Natural killer cell (primary cell): ENCODE measurements at regions of chr12 and their contacts with region 1.

Region 1: DNA sequence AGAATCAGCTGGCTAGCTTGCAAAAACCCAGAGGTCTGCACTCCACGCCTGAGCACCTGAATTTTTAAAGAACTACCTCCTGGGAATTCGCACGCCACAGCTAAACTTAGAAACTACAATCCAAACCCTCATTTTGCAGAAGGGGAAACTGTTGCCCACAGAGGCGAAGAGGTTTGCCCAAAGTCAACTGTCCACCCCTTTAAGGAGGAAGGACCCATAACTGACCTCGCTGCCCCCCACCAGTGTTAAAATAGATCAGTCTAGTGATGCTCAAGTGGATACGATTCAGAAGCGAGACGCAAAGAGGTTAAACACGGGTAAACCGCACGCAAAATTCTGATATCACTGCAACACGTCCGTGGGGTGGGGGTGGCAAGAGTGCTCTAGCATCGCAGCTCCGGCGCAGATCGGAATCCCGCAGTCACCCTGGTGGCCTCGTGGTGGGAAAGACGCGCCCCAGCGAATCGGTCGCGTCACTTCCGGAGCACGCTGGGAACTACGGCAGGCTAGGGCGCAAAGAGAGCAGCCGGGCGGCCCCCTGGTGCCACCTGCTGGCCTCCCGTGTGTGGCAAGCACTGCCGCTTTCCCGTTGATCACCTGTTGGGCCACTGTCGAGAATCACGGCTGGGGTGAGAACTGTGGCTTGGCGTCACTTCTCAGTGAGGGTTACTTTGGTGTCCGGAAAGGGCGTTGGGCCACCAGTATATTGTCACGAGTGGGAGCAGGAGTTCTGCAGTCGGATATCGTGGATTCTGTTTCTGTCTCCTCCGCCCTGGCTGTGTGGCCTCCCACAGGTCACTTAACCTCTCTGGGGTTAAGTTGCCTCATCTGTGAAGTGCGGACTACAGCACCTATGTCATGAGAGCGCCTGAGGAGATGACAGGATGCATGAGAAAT is at the start of gene ALKBH2:
- DNase-seq: peak; percentile 96 to 98
- ATAC-seq: peak; percentile 82 to 92 (median 82)
- H3K4me3 ChIP-seq: peak within 1 kb of the TSS; percentile 58
- H3K4me3 Mint-ChIP-seq: peak within 1 kb of the TSS; percentile 86
- H3K27ac ChIP-seq: peak within 1 kb of the TSS; percentile 63
- H3K27ac Mint-ChIP-seq: peak within 1 kb of the TSS; percentile 90 to 93
- H3K4me1 ChIP-seq: peaks cover 30% of the 10 kb centered on the region
- H3K4me1 Mint-ChIP-seq: peaks cover 26 to 33% of the 10 kb centered on the region in 2 donors
- H3K27me3 ChIP-seq: no peaks in the 10 kb centered on the region
- H3K27me3 Mint-ChIP-seq: no peaks in the 10 kb centered on the region
- CTCF ChIP-seq: peak; percentile 93
- total RNA-seq, gene ALKBH2: 10.9 to 12.6 (median 11.9) TPM

Region 2: GRCh38 chr12:108664338-108665258 is 428.7 kb before region 1 on chr12:
- intact Hi-C with region 1: loop called (anchors 2 kb)
- DNase-seq: peak; percentile 65 to 90
- ATAC-seq: peak; percentile 99 to 100 (median 100)
- H3K4me3 ChIP-seq: no peak overlapping the region
- H3K4me3 Mint-ChIP-seq: no peak overlapping the region
- H3K27ac ChIP-seq: peak overlapping the region; percentile 14
- H3K27ac Mint-ChIP-seq: peak overlapping the region; percentile 63 to 88
- H3K4me1 ChIP-seq: peaks cover 6% of the 10 kb centered on the region
- H3K4me1 Mint-ChIP-seq: peaks cover 5 to 12% of the 10 kb centered on the region in 2 donors
- H3K27me3 ChIP-seq: no peaks in the 10 kb centered on the region
- H3K27me3 Mint-ChIP-seq: no peaks in the 10 kb centered on the region
- CTCF ChIP-seq: peak; percentile 84

Region 3: DNA sequence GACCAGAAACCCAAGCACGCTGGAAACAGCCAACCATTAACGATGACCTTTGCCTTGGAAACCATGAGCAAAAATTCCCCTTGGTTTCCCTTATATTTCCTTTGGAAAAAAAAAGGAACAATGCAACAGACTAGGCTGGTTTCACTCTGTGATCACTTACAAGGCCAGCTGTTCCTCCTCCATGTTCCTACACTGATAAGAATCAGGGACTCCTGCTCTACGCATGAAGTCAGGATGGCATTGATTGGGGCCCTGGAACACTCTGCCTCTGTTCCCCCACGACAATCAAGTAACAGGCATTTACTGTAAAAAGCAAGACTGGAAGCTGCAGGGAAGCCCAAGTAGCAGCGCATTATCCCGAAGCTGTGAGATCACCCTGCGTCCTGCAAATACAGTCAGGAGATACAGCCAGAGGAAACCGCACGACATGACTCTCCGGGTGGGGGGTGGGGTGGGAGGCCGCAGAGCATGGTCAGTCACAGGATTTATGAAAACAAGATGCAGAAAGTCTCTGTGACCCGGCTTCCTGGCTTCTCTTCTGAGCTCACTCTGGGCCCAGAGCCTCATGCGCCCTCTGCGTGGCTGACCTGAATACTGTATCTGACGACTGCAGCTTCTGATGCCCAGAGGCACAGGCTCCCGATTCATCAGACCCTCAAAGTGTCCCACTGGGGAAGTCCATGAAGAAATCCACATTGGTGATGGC is 267.0 kb before region 1 on chr12:
- intact Hi-C with region 1: loop called (anchors 10 kb)
- DNase-seq: peak; percentile 21 to 35
- ATAC-seq: peak; percentile 62 to 74 (median 72)
- H3K4me3 ChIP-seq: peak overlapping the region; percentile 6
- H3K4me3 Mint-ChIP-seq: peak overlapping the region; percentile 72
- H3K27ac ChIP-seq: peak overlapping the region; percentile 68
- H3K27ac Mint-ChIP-seq: peak overlapping the region; percentile 91 to 95
- H3K4me1 ChIP-seq: peaks cover 64% of the 10 kb centered on the region
- H3K4me1 Mint-ChIP-seq: peaks cover 68 to 73% of the 10 kb centered on the region in 2 donors
- H3K27me3 ChIP-seq: no peaks in the 10 kb centered on the region
- H3K27me3 Mint-ChIP-seq: no peaks in the 10 kb centered on the region
- CTCF ChIP-seq: no peak

Region 4: DNA sequence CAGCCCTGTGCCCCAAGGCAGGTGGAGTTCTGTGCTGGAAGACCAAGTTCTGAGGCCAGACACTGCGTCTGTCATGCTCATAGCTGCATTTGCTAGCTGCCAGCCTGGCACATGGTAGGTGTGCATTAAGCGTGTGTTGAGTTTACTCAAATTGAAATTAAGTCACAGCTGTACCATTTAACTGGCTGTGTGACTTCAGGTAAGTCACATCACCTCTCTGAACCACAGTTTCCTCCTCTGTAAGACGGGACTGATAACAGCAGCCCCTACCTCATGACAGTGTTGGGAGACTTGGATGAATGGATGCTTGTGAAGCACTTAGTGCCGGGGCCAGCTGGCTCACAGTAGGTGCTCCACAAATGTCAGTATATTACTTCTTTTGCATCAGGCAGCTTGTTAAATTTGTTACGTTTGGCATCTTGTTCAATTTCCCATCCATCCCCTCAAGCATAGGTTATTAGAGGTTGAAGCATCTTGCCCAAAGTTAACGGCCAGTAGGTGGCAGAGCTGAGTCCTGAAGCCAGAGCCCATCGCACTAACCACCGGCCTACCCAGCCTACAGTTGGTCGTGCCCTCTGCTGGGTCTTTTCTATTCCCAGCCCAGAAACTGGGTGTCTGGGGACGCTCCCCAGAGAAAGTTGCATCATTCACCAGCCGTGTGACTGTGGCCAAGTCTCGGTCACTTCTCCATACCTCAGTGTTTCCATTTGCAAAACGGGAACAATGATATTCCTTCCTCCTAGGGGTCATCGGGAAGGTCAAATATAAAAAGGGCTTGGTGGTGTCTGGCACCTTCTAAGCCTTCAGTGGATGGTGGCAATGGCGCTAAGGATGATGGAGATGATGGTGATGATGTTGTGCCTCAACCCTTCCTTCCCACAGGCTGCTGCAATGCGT is 208.9 kb before region 1 on chr12:
- intact Hi-C with region 1: loop called (anchors 2 kb)
- DNase-seq: peak; percentile 43 to 77
- ATAC-seq: peak; percentile 79 to 88 (median 80)
- H3K4me3 ChIP-seq: no peak overlapping the region
- H3K4me3 Mint-ChIP-seq: no peak overlapping the region
- H3K27ac ChIP-seq: no peak overlapping the region
- H3K27ac Mint-ChIP-seq: no peak overlapping the region
- H3K4me1 ChIP-seq: peaks cover 8% of the 10 kb centered on the region
- H3K4me1 Mint-ChIP-seq: no peaks in the 10 kb centered on the region
- H3K27me3 ChIP-seq: no peaks in the 10 kb centered on the region
- H3K27me3 Mint-ChIP-seq: no peaks in the 10 kb centered on the region
- CTCF ChIP-seq: peak; percentile 50

Region 5: GRCh38 chr12:108950991-108951739 is 142.1 kb before region 1 on chr12:
- intact Hi-C with region 1: loop called (anchors 1 kb)
- DNase-seq: peak; percentile 61 to 86
- ATAC-seq: peak; percentile 75 to 89 (median 84)
- H3K4me3 ChIP-seq: no peak overlapping the region
- H3K4me3 Mint-ChIP-seq: no peak overlapping the region
- H3K27ac ChIP-seq: no peak overlapping the region
- H3K27ac Mint-ChIP-seq: no peak overlapping the region
- H3K4me1 ChIP-seq: peaks cover 5% of the 10 kb centered on the region
- H3K4me1 Mint-ChIP-seq: peaks cover 0 to 5% of the 10 kb centered on the region in 2 donors
- H3K27me3 ChIP-seq: no peaks in the 10 kb centered on the region
- H3K27me3 Mint-ChIP-seq: peaks cover 7 to 11% of the 10 kb centered on the region in 2 donors
- CTCF ChIP-seq: peak; percentile 92

Region 6: GRCh38 chr12:109020796-109021380 is 72.4 kb before region 1 on chr12 and contains the start of gene SVOP:
- intact Hi-C with region 1: no loop called
- DNase-seq: peak; percentile 16 to 22
- ATAC-seq: peak in 2 of 3 donors; percentile 46 to 67
- H3K4me3 ChIP-seq: no peak within 1 kb of the TSS
- H3K4me3 Mint-ChIP-seq: no peak within 1 kb of the TSS
- H3K27ac ChIP-seq: no peak within 1 kb of the TSS
- H3K27ac Mint-ChIP-seq: no peak within 1 kb of the TSS
- H3K4me1 ChIP-seq: peaks cover 5% of the 10 kb centered on the region
- H3K4me1 Mint-ChIP-seq: peaks cover 0 to 6% of the 10 kb centered on the region in 2 donors
- H3K27me3 ChIP-seq: peaks cover 4% of the 10 kb centered on the region
- H3K27me3 Mint-ChIP-seq: peaks cover 23 to 41% of the 10 kb centered on the region in 2 donors
- CTCF ChIP-seq: no peak
- total RNA-seq, gene SVOP: not detected

Region 7: DNA sequence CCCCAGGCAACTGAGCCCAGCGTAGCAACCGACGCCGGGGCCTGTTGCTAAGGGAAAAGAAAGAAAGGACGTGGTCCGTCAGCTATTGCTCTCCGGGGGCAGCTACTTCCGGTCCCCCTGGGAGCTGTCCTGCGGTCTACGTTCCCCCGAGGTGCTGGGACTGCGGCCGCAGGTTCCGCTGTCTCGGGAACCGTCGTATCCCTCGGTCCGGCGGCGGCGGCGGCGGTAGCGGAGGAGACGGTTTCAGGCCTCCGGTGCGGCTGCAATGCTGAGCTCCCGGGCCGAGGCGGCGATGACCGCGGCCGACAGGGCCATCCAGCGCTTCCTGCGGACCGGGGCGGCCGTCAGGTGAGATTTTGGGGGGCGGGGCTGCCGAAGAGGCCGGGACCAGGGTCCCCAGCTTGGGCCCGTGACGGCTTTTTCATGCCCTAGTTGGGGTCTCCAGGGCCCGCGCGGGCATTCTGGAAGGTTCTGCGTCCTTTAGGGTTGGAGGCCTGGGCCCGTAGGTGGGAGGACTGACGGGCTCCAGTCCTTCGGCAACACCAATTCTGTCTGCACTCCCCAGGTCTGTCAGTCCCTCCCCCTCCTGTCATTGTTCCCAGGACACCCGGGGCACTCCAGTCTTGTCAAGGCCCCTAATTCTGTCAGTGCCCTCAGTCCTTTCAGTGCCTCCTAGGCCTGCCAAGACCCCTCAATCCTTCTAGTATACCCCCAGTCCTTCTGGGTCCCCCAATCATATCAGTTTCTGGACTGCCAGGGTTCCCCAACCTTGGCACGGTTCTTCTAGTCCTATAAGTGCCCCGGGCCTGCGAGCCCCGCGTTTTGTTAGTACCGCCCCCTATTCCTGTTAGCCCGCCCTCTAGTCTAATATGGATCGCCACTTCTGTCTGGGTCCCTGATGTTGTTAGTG is 40.6 kb before region 1 on chr12 and contains the start of gene USP30:
- intact Hi-C with region 1: loop called (anchors 1 kb)
- DNase-seq: peak; percentile 83 to 94
- ATAC-seq: peak; percentile 65 to 90 (median 85)
- H3K4me3 ChIP-seq: peak within 1 kb of the TSS; percentile 87
- H3K4me3 Mint-ChIP-seq: peak within 1 kb of the TSS; percentile 99
- H3K27ac ChIP-seq: peak within 1 kb of the TSS; percentile 94
- H3K27ac Mint-ChIP-seq: peak within 1 kb of the TSS; percentile 94 to 97
- H3K4me1 ChIP-seq: peaks cover 23% of the 10 kb centered on the region
- H3K4me1 Mint-ChIP-seq: peaks cover 23 to 27% of the 10 kb centered on the region in 2 donors
- H3K27me3 ChIP-seq: no peaks in the 10 kb centered on the region
- H3K27me3 Mint-ChIP-seq: no peaks in the 10 kb centered on the region
- CTCF ChIP-seq: no peak
- total RNA-seq, gene USP30: 18.4 to 20.8 (median 20.1) TPM